ENCODE measurements at regions of chr7 and their contacts with region 1.

Region 1: GRCh38 chr7:55250313-55250712 is 114.8 kb upstream of the LANCL2 start:
- DNase-seq: peak; percentile 61 to 65
- ATAC-seq: peak; percentile 56 to 64; a peak in 4 of 6 replicates
- H3K4me3 ChIP-seq: no peak overlapping the region
- H3K27ac ChIP-seq: no peak overlapping the region
- H3K4me1 ChIP-seq: peaks cover 23% of the 10 kb centered on the region; the same call in 2 of the 3 replicates
- CTCF ChIP-seq: peak; percentile 56
- EP300 ChIP-seq: no peak
- POLR2A ChIP-seq: no peak
- RAD21 ChIP-seq: peak in 1 of 2 experiments; percentile 31; a peak in 1 of 5 replicates

Region 2: GRCh38 chr7:55237156-55237893 is 13.0 kb before region 1 on chr7:
- CTCF ChIA-PET with region 1: interaction called, 56 read pairs
- POLR2A ChIA-PET with region 1: no interaction called
- DNase-seq: no peak
- ATAC-seq: no peak
- H3K4me3 ChIP-seq: no peak overlapping the region
- H3K27ac ChIP-seq: no peak overlapping the region
- H3K4me1 ChIP-seq: no peaks in the 10 kb centered on the region
- CTCF ChIP-seq: no peak
- EP300 ChIP-seq: no peak
- POLR2A ChIP-seq: no peak
- RAD21 ChIP-seq: no peak